ENCODE measurements at regions of chr10 and their contacts with region 1.

Region 1: DNA sequence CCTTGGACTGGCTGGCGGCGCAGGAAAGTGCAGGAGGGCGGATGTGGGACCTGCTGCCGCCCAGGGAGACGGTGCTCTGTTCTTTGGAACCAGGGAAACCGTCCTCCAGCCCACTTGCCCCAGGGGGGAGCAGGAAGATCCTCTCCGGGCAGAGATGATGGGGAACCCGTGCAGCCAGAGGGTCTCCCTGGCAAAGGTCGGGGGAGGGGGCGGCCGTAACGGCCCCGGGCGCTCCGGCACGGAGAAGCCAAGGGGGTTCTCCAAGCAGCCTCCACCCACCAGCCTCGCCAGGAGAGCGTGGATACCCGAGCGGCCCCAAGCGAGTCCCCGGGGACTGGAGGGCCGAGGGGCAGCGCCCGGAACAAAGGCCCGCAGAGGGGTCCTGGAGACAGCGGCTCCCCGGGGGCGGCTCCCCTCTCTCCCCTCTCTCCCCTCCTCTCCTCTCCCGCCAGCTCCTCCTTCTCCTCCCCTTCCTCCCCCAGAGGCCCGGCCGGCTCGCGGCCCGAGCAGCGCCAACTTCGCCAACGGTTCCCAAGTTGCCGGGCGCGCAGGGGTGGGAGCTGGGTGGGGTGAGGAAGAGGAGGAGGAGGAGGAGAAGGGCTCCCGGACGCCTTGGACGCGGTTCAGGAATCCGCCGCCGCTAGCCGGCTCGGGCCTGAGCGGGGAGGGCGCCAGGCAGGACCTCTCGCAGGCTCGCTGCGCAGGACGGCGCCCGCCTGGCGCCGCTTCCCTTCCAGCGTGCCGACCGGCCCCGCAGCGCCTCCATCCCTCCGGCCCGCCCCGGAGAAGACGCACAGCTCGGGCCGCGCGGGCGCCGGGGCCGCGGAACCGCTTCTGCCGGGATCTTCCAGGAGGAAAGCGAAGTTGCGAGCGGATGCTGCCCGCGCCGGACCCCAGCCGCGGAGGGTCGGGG is at the start of gene CHST3:
- DNase-seq: peak; percentile 91
- H3K4me3 ChIP-seq: peak within 1 kb of the TSS; percentile 63 to 84 (median 64)
- H3K27ac ChIP-seq: peak within 1 kb of the TSS; percentile 93 to 99 (median 93)
- H3K4me1 ChIP-seq: peaks cover 0 to 53% (median 47%) of the 10 kb centered on the region in 4 donors
- H3K27me3 ChIP-seq: no peaks in the 10 kb centered on the region
- CTCF ChIP-seq: no peak
- EP300 ChIP-seq: peak in 1 of 4 donors; percentile 41
- POLR2A ChIP-seq: peak in 1 of 2 donors; percentile 24
- total RNA-seq, gene CHST3: 12.8 to 25.5 (median 16.5) TPM

Region 2: DNA sequence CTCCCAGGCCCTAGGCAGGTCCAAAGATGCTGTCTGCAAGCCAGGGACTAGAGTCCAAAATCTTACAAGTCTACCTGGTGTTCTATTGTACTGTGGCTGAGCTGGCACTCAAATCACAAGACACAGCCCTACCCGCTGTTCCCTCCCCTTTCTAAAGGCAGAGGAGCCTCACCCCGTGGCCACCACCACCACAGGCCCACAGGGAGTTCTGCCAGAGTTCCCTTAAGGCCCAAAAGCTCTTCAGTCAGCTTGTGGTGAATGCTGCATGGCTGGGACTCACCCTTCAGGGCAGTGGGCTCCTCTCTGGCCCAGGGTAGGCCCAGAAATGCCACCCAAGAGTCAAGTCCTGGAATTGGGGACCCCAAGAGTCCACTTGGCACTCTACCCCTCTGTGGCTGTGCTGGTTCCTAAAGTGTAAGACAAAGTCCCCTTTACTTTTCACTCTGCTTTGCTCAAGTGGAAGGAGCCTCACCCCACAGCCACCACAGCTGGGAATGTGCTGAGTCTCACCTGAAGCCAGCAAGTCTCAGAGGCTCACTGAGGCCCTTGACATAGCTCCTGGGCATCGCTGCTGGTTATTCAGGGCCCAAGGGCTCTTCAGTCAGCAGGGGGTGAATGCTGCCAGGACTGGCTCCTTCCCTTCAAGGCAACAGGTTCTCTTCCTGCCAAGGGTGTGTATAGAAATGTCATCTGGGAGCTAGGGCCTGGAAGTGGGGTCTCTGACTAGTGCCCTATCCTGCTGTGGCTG is 64.2 kb before region 1 on chr10:
- intact Hi-C with region 1: loop called (anchors 5 kb)
- DNase-seq: no peak
- H3K4me3 ChIP-seq: no peak overlapping the region
- H3K27ac ChIP-seq: no peak overlapping the region
- H3K4me1 ChIP-seq: no peaks in the 10 kb centered on the region
- H3K27me3 ChIP-seq: no peaks in the 10 kb centered on the region
- CTCF ChIP-seq: no peak
- EP300 ChIP-seq: no peak
- POLR2A ChIP-seq: no peak

Region 3: DNA sequence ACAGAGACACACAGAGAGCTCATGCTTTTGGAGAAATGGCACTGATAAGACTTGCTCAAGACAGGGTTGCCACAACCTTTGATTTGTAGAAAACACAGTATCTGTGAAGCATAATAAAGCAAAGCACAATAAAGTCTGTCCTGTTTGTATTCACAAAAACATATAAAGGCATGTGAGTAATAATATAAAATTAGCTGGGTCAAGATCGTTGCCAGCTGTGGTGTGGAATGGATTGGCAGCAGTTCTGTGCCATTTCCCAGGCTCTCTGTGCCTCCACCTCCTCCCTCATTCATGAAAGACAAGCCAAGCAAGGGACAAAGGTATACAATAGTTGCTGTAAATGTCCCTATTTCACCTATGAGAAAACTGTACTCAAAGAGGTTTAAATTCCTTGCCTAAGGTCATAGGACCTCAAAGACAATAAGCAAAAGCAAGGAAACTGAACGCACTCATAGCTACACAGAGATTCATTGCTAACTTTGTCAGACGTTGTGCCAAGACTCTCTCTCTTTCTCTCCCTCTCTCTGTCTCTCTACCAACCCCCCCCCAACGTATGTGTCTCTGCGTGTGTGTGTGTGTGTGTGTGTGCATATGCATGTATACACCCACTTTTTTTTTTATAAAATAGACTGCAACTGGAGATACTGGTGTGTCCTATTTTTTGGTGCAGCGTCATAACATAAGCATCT is 32.0 kb after region 1 on chr10:
- intact Hi-C with region 1: no loop called
- DNase-seq: no peak
- H3K4me3 ChIP-seq: no peak overlapping the region
- H3K27ac ChIP-seq: peak overlapping the region in 3 of 4 donors; percentile 34 to 59 (median 57)
- H3K4me1 ChIP-seq: peaks cover 0 to 60% (median 53%) of the 10 kb centered on the region in 4 donors
- H3K27me3 ChIP-seq: no peaks in the 10 kb centered on the region
- CTCF ChIP-seq: no peak
- EP300 ChIP-seq: no peak
- POLR2A ChIP-seq: no peak

Region 4: GRCh38 chr10:72009411-72010081 is 45.5 kb after region 1 on chr10:
- intact Hi-C with region 1: loop called (anchors 2 kb)
- DNase-seq: peak; percentile 100
- H3K4me3 ChIP-seq: no peak overlapping the region
- H3K27ac ChIP-seq: peak overlapping the region; percentile 86 to 96 (median 90)
- H3K4me1 ChIP-seq: peaks cover 0 to 76% (median 67%) of the 10 kb centered on the region in 4 donors
- H3K27me3 ChIP-seq: no peaks in the 10 kb centered on the region
- CTCF ChIP-seq: no peak
- EP300 ChIP-seq: peak in 3 of 4 donors; percentile 65 to 80 (median 77)
- POLR2A ChIP-seq: no peak

Measured in sigmoid colon (tissue), 7 donors.